ENCODE measurements at regions of chr5 and their contacts with region 1.

Region 1: DNA sequence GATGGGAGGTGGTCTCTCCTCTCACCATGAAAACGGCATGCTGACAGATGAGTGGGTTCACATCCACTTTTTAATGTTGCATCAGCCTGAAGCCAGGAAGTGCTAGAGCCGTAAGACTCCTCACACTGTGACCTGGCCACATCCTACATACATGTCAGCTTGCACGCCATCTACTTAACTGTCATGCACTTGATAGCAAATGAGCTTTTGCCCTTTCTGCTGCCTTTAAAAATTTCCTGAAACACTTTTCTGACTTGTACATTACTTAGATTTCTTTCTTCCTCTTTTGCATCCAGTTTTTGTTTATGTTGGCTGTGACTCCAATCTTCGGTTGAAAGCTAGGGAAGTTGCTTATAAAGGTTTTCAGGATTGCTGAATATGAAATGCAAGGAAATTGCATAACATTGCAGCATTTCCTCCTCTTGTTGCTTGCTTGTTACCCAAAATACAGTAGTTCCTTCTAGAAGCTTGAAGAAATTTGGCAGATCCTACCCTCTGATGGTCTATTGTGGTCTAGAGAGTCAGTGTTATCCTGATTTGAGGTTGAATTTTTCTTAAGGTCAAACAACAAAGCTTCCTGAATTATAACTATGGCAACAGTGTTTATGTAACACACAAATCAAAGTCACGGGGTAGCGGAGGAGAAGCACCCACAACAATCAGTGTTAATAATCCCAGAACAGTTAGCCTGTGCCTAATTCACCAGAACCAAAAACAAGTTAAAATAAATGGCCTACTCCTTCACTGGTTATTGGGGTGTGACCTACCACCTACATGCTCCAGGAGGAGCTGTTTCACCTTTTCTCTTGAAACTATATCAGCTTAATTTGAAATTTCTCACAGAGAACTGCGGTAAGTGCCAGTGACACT is 232.5 kb downstream of the ARHGAP26 start:
- DNase-seq: peak in 13 of 14 experiments; percentile 10 to 91 (median 37)
- ATAC-seq: peak; percentile 83
- H3K4me3 ChIP-seq: peak overlapping the region; percentile 3
- H3K4me3 Mint-ChIP-seq: peak overlapping the region; percentile 55
- H3K27ac ChIP-seq: peak overlapping the region; percentile 76 to 87
- H3K27ac Mint-ChIP-seq: peak overlapping the region; percentile 91
- H3K4me1 ChIP-seq: peaks cover 33% of the 10 kb centered on the region
- H3K4me1 Mint-ChIP-seq: peaks cover 48% of the 10 kb centered on the region
- H3K27me3 ChIP-seq: no peaks in the 10 kb centered on the region
- H3K27me3 Mint-ChIP-seq: no peaks in the 10 kb centered on the region
- CTCF ChIP-seq: peak; percentile 73

Region 2: DNA sequence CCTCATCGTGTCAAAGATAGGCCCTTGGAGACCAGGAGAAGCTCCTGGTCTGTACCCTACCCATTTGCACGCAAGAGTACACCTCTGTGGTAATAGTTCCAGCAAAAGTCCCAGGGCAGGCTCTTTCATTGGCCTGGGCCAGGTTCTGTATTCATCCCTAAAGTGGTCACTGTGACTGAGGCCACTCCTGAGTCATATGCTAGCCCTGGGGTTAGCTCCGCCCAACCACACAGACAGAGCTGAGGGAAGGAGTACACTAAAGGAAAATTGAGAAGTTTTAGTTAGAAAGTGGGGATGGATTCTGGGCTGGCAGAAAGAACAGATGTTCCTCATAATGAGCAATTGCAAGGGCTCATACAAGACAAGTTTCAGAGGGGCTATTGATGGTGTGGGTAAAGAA is 25.8 kb before region 1 on chr5:
- CTCF ChIA-PET with region 1: interaction called, 10 read pairs
- POLR2A ChIA-PET with region 1: interaction called, 6 read pairs
- intact Hi-C with region 1: no loop called
- DNase-seq: peak in 2 of 14 experiments; percentile 51 to 61
- ATAC-seq: no peak
- H3K4me3 ChIP-seq: no peak overlapping the region
- H3K4me3 Mint-ChIP-seq: no peak overlapping the region
- H3K27ac ChIP-seq: peak overlapping the region in 1 of 2 donors; percentile 42
- H3K27ac Mint-ChIP-seq: peak overlapping the region; percentile 75
- H3K4me1 ChIP-seq: peaks cover 36% of the 10 kb centered on the region
- H3K4me1 Mint-ChIP-seq: peaks cover 44% of the 10 kb centered on the region
- H3K27me3 ChIP-seq: no peaks in the 10 kb centered on the region
- H3K27me3 Mint-ChIP-seq: no peaks in the 10 kb centered on the region
- CTCF ChIP-seq: no peak

Region 3: GRCh38 chr5:143074414-143074996 is 71.8 kb after region 1 on chr5:
- CTCF ChIA-PET with region 1: no interaction called
- POLR2A ChIA-PET with region 1: no interaction called
- intact Hi-C with region 1: no loop called
- DNase-seq: no peak
- ATAC-seq: no peak
- H3K4me3 ChIP-seq: no peak overlapping the region
- H3K4me3 Mint-ChIP-seq: no peak overlapping the region
- H3K27ac ChIP-seq: no peak overlapping the region
- H3K27ac Mint-ChIP-seq: no peak overlapping the region
- H3K4me1 ChIP-seq: no peaks in the 10 kb centered on the region
- H3K4me1 Mint-ChIP-seq: no peaks in the 10 kb centered on the region
- H3K27me3 ChIP-seq: no peaks in the 10 kb centered on the region
- H3K27me3 Mint-ChIP-seq: no peaks in the 10 kb centered on the region
- CTCF ChIP-seq: no peak